ENCODE measurements at regions of chr14 and their contacts with region 1.

Region 1: DNA sequence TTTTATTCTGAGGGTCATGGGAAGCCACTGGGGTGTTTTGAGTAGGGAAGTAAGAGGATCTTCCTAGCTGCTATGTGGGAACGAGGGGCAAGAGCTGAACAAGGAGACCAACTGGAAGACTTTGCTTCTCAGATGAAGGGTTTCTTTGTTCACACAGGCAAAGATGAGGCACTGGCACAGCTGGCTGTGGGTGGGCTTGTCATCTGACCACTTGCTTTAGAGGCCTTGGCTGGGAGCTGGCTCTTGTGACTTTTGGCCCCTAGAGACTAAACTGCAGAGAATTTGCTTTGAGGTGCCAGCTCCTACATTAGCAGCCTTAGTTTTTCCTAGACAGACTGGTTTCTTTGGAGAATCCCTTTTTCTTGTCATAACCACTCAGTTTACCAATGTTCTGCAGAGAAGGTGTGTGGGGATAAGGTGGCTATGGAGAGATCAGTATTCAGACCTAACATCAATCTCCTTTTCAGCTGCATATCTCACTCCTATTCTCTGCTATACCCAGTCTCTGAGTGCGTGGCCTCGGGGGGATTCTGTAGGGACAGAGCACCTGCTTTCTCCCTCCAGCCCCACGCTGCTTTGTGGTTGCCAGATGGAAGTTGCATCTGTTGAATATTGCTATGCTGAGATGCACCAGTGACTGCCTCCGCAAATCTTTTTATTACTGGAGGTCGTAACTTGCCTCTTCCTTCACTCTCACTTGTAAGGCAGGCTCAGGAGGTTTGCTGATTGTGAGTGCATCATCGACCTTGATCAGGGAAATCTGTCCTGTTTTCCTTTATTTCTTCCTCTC is 12.7 kb downstream of the PPP2R5C start:
- DNase-seq: no peak
- ATAC-seq: no peak
- H3K4me3 ChIP-seq: no peak overlapping the region
- H3K4me3 Mint-ChIP-seq: no peak overlapping the region
- H3K27ac ChIP-seq: no peak overlapping the region
- H3K27ac Mint-ChIP-seq: no peak overlapping the region
- H3K4me1 ChIP-seq: peaks cover 11% of the 10 kb centered on the region
- H3K4me1 Mint-ChIP-seq: peaks cover 45% of the 10 kb centered on the region
- H3K27me3 ChIP-seq: no peaks in the 10 kb centered on the region
- H3K27me3 Mint-ChIP-seq: no peaks in the 10 kb centered on the region
- CTCF ChIP-seq: no peak

Region 2: GRCh38 chr14:101761032-101761880 is 12.9 kb before region 1 on chr14 and contains the start of gene PPP2R5C:
- CTCF ChIA-PET with region 1: interaction called, 9 read pairs
- POLR2A ChIA-PET with region 1: interaction called, 11 read pairs
- intact Hi-C with region 1: no loop called
- DNase-seq: peak; percentile 78 to 94 (median 86)
- ATAC-seq: peak; percentile 60
- H3K4me3 ChIP-seq: peak within 1 kb of the TSS; percentile 97
- H3K4me3 Mint-ChIP-seq: peak within 1 kb of the TSS; percentile 97
- H3K27ac ChIP-seq: peak within 1 kb of the TSS; percentile 79
- H3K27ac Mint-ChIP-seq: peak within 1 kb of the TSS; percentile 91
- H3K4me1 ChIP-seq: peaks cover 30% of the 10 kb centered on the region
- H3K4me1 Mint-ChIP-seq: peaks cover 43% of the 10 kb centered on the region
- H3K27me3 ChIP-seq: no peaks in the 10 kb centered on the region
- H3K27me3 Mint-ChIP-seq: no peaks in the 10 kb centered on the region
- CTCF ChIP-seq: no peak
- total RNA-seq, gene PPP2R5C: 463 to 487 TPM

Region 3: DNA sequence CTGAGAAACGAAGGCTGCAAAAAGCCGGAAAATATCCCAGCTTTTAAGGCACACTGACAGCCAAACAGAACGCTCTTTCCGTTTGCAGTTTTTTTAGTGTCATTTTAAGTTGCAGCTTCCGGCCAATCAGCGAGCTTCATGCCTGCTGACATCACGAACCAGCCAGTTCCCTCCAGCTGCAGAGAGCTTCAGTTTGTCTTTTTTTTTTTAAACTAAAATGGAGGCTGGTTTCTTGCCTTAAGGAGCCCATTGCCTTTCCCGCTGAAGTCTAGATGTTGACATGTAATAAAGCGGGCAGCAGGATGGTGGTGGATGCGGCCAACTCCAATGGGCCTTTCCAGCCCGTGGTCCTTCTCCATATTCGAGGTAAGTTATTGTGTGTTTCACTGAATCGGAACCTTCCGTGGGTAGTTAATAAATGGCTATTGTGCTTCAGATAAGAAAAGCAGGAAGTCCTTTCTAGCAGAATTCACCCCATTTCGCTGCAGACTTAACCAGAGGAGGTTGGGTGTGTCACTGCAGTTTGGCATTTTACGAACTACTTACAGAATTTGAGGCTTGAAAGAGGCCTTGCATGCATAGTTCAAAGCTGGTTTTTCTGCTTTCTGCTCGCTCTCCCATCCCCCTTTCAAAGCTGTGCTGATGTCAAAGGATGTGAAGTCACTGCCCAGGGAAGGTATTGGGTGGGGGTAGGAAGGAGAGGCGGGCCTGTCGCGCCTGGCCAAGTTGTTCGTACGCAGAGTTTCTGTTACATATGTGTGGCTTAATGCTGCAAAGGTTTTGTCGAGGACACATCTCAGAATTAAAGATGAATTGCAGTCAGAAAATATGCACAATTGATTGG is 35.7 kb after region 1 on chr14:
- CTCF ChIA-PET with region 1: interaction called, 26 read pairs
- POLR2A ChIA-PET with region 1: interaction called, 44 read pairs
- intact Hi-C with region 1: loop called in 1 of 2 experiments (anchors 5 kb)
- DNase-seq: peak; percentile 73 to 97 (median 81)
- ATAC-seq: peak; percentile 84
- H3K4me3 ChIP-seq: peak overlapping the region; percentile 79
- H3K4me3 Mint-ChIP-seq: peak overlapping the region; percentile 94
- H3K27ac ChIP-seq: peak overlapping the region; percentile 99
- H3K27ac Mint-ChIP-seq: peak overlapping the region; percentile 98
- H3K4me1 ChIP-seq: peaks cover 39% of the 10 kb centered on the region
- H3K4me1 Mint-ChIP-seq: peaks cover 56% of the 10 kb centered on the region
- H3K27me3 ChIP-seq: no peaks in the 10 kb centered on the region
- H3K27me3 Mint-ChIP-seq: no peaks in the 10 kb centered on the region
- CTCF ChIP-seq: no peak

Region 4: DNA sequence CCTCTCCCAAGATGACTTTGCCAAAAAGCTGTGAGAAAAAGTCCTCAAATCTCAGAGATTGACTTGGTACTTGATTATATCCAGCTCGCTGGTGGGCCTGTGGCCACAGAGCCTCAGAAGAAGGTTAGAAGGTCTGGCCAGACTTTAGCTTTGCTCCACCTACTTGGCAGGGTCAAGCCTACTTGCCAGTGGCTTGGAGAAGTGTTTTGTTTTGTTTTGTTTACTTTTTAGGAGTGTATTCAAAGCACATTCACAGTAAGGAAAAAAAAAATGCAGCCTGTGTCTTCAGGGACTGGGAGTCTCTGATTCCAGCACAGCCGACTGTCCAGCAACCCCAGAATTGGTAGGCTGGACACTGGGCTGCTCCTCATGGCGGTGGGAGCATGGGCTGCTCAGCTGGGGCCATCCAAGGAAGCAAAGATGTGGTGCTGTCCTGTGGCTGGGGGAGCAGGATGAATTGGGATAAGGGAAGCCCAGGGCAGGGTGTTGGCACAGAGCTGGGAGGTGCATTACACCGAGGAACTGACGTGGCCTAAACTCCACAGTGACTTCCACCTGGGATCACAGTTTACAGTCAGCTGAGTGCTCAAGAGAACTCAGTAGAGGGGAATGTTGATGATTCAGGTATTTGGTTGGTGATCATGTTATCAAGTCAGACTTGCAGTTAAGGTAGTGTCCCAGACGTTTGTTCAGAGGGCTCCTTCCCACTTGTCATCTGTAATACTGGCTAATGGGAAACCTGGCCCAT is 60.8 kb after region 1 on chr14:
- CTCF ChIA-PET with region 1: interaction called, 6 read pairs
- POLR2A ChIA-PET with region 1: interaction called, 11 read pairs
- intact Hi-C with region 1: no loop called
- DNase-seq: no peak
- ATAC-seq: no peak
- H3K4me3 ChIP-seq: no peak overlapping the region
- H3K4me3 Mint-ChIP-seq: peak overlapping the region; percentile 34
- H3K27ac ChIP-seq: peak overlapping the region; percentile 1 to 14
- H3K27ac Mint-ChIP-seq: peak overlapping the region; percentile 87
- H3K4me1 ChIP-seq: peaks cover 90% of the 10 kb centered on the region
- H3K4me1 Mint-ChIP-seq: peaks cover 92% of the 10 kb centered on the region
- H3K27me3 ChIP-seq: no peaks in the 10 kb centered on the region
- H3K27me3 Mint-ChIP-seq: no peaks in the 10 kb centered on the region
- CTCF ChIP-seq: no peak

Region 5: GRCh38 chr14:101849125-101849524 is 74.9 kb after region 1 on chr14:
- CTCF ChIA-PET with region 1: interaction called, 43 read pairs
- POLR2A ChIA-PET with region 1: interaction called, 14 read pairs
- intact Hi-C with region 1: no loop called
- DNase-seq: no peak
- ATAC-seq: no peak
- H3K4me3 ChIP-seq: no peak overlapping the region
- H3K4me3 Mint-ChIP-seq: peak overlapping the region; percentile 23
- H3K27ac ChIP-seq: no peak overlapping the region
- H3K27ac Mint-ChIP-seq: peak overlapping the region; percentile 78
- H3K4me1 ChIP-seq: peaks cover 75% of the 10 kb centered on the region
- H3K4me1 Mint-ChIP-seq: peaks cover 91% of the 10 kb centered on the region
- H3K27me3 ChIP-seq: no peaks in the 10 kb centered on the region
- H3K27me3 Mint-ChIP-seq: no peaks in the 10 kb centered on the region
- CTCF ChIP-seq: no peak

Region 6: GRCh38 chr14:101876555-101876938 is 102.3 kb after region 1 on chr14:
- CTCF ChIA-PET with region 1: interaction called, 7 read pairs
- POLR2A ChIA-PET with region 1: interaction called, 14 read pairs
- intact Hi-C with region 1: loop called in 1 of 2 experiments (anchors 1 kb)
- DNase-seq: peak; percentile 34 to 92 (median 64)
- ATAC-seq: peak; percentile 93
- H3K4me3 ChIP-seq: peak overlapping the region; percentile 27
- H3K4me3 Mint-ChIP-seq: peak overlapping the region; percentile 61
- H3K27ac ChIP-seq: peak overlapping the region; percentile 56 to 64
- H3K27ac Mint-ChIP-seq: peak overlapping the region; percentile 79
- H3K4me1 ChIP-seq: peaks cover 60% of the 10 kb centered on the region
- H3K4me1 Mint-ChIP-seq: peaks cover 78% of the 10 kb centered on the region
- H3K27me3 ChIP-seq: no peaks in the 10 kb centered on the region
- H3K27me3 Mint-ChIP-seq: no peaks in the 10 kb centered on the region
- CTCF ChIP-seq: no peak

Region 7: GRCh38 chr14:101964297-101965144 is 190.3 kb after region 1 on chr14 and contains the start of gene DYNC1H1:
- CTCF ChIA-PET with region 1: interaction called, 4 read pairs
- POLR2A ChIA-PET with region 1: no interaction called
- intact Hi-C with region 1: loop called in 1 of 2 experiments (anchors 5 kb)
- DNase-seq: peak; percentile 75 to 96 (median 86)
- ATAC-seq: peak; percentile 83
- H3K4me3 ChIP-seq: peak within 1 kb of the TSS; percentile 86
- H3K4me3 Mint-ChIP-seq: peak within 1 kb of the TSS; percentile 93
- H3K27ac ChIP-seq: peak within 1 kb of the TSS; percentile 68 to 82
- H3K27ac Mint-ChIP-seq: peak within 1 kb of the TSS; percentile 85
- H3K4me1 ChIP-seq: peaks cover 44% of the 10 kb centered on the region
- H3K4me1 Mint-ChIP-seq: peaks cover 53% of the 10 kb centered on the region
- H3K27me3 ChIP-seq: no peaks in the 10 kb centered on the region
- H3K27me3 Mint-ChIP-seq: no peaks in the 10 kb centered on the region
- CTCF ChIP-seq: no peak
- total RNA-seq, gene DYNC1H1: 286 to 293 TPM